ENCODE measurements at regions of chr2 and their contacts with region 1.

Region 1: DNA sequence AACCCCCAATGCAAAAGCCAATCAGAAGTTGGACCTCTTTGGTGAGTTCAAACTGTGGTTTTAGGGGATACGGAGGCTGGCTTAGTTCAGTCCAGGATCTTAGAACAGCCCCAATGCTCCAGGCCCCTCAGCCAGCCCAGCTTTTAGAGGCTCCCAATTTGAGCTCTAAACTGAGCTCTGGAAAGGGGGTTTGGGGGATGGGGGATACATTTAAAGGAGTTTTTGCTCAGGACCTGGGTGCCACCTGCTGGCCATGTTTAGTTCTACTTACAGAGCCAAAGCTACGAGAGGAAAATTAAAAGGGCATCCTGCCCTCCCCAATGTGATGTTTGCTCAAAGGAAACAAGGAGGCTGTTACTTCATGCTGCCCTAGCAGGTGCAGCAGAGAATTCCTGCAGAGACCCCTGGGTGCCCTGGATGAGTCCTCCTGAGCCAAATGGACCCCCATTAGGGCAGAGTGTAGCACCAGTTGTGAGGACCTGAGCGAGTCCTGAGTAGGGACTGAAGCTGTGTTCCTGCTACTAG is 15.9 kb upstream of the TMEM214 start:
- DNase-seq: peak; percentile 84
- H3K4me3 ChIP-seq: no peak overlapping the region
- H3K27ac ChIP-seq: no peak overlapping the region
- H3K4me1 ChIP-seq: peaks cover 28% of the 10 kb centered on the region
- H3K27me3 ChIP-seq: no peaks in the 10 kb centered on the region

Region 2: GRCh38 chr2:25972049-25972823 is 1044.6 kb before region 1 on chr2:
- in situ Hi-C with region 1: no loop called
- DNase-seq: peak; percentile 55
- H3K4me3 ChIP-seq: no peak overlapping the region
- H3K27ac ChIP-seq: no peak overlapping the region
- H3K4me1 ChIP-seq: peaks cover 11% of the 10 kb centered on the region
- H3K27me3 ChIP-seq: no peaks in the 10 kb centered on the region

Region 3: GRCh38 chr2:26968001-26968400 is 48.9 kb before region 1 on chr2:
- in situ Hi-C with region 1: loop called (anchors 10 kb)
- DNase-seq: peak; percentile 36
- H3K4me3 ChIP-seq: no peak overlapping the region
- H3K27ac ChIP-seq: no peak overlapping the region
- H3K4me1 ChIP-seq: 0 out of 2 replicates have a peak, but pooled peaks cover 8% of the 10 kb centered on the region
- H3K27me3 ChIP-seq: peaks cover 8% of the 10 kb centered on the region